H1 (cell line): ENCODE measurements at regions of chr15 and their contacts with region 1.

Region 1: DNA sequence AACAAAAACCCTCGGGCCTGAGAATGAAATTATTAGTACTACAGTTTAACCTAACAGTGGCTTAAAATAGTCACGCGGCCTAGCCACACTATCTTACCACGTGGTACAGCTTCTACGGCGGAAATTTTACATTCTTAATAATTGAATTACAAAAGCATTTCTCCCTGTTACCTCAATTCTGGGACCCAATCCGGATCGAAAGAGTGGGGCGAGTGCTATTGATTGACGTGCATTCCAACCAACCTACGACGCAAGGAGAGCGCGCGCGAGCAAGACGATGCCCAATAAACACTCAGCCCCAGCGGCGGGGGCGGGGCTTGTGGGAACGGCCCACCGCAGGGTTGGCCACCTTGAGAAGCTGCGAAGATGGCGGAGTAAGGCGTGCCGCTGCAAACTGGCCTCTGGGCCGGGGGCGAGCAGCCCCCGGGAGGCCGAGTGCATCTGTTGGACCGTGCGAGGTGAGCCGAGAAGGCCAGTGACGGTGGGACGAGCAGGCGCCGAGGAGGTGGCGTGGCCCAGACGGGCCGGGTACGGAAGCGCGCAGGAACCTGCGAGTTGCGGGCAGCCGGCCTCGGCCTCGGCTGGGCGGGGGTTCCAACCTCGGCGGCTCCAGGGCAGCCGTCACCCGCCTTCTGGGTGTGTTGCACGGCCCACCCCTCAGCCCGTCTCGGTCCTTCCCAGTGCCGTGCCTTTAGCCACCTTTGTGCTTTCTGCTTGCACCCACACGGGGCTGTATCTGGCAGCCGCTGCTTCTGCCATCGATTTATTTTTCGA is 48.6 kb downstream of the OIP5 start:
- DNase-seq: peak; percentile 96 to 97
- H3K4me3 ChIP-seq: peak overlapping the region; percentile 76 to 95 (median 90)
- H3K27ac ChIP-seq: peak overlapping the region; percentile 92
- H3K4me1 ChIP-seq: peaks cover 0 to 5% (median 2%) of the 10 kb centered on the region in 4 experiments; a peak in 3 of 7 replicates
- H3K27me3 ChIP-seq: no peaks in the 10 kb centered on the region
- CTCF ChIP-seq: no peak
- EP300 ChIP-seq: no peak
- POLR2A ChIP-seq: peak; percentile 95 to 98
- RAD21 ChIP-seq: no peak

Region 2: DNA sequence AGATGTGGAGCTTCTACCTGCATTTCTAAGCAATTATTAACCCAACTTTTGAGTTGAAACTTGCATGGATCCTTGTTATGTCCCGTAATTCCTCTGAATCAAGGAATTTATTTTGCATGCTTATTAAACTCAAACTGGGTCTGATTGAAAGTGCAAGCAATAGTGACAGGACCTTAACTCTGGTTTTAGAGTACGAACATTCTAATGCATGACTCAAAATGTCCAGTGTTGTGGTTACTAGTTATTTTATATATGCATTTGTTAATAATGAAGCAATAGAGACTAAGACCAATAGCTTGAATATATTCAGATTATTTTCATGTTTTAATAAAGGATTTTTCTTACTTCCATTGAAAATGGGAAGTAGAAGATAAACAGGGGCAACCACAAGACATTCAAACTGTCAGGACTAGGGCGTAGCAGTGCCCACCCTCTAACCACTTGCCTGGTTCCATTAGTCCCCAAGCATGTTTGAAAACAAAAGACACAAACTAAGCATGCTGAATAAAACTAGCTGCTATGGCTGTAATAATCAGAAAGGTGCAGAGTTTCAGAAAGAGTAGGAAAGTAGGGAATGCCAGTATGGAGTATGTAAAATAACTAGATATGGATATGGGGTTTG is 20.4 kb after region 1 on chr15:
- CTCF ChIA-PET with region 1: interaction called, 3 read pairs
- POLR2A ChIA-PET with region 1: interaction called, 15 read pairs
- DNase-seq: no peak
- H3K4me3 ChIP-seq: no peak overlapping the region
- H3K27ac ChIP-seq: no peak overlapping the region
- H3K4me1 ChIP-seq: peaks cover 0 to 11% (median 2%) of the 10 kb centered on the region in 4 experiments; a peak in 3 of 7 replicates
- H3K27me3 ChIP-seq: no peaks in the 10 kb centered on the region
- CTCF ChIP-seq: no peak
- EP300 ChIP-seq: no peak
- POLR2A ChIP-seq: no peak
- RAD21 ChIP-seq: no peak

Region 3: GRCh38 chr15:41331833-41332787 is 48.3 kb after region 1 on chr15 and contains the start of gene OIP5:
- CTCF ChIA-PET with region 1: interaction called, 6 read pairs
- POLR2A ChIA-PET with region 1: interaction called, 18 read pairs
- DNase-seq: peak; percentile 93 to 98
- H3K4me3 ChIP-seq: peak within 1 kb of the TSS; percentile 83 to 92 (median 90)
- H3K27ac ChIP-seq: peak within 1 kb of the TSS; percentile 90
- H3K4me1 ChIP-seq: no peaks in the 10 kb centered on the region; a peak in 1 of 7 replicates
- H3K27me3 ChIP-seq: no peaks in the 10 kb centered on the region
- CTCF ChIP-seq: peak; percentile 61 to 69 (median 62)
- EP300 ChIP-seq: no peak
- POLR2A ChIP-seq: peak; percentile 96 to 98
- RAD21 ChIP-seq: peak; percentile 59 to 61
- total RNA-seq, gene OIP5: 34.8 and 36.7 TPM in 2 replicates

Region 4: DNA sequence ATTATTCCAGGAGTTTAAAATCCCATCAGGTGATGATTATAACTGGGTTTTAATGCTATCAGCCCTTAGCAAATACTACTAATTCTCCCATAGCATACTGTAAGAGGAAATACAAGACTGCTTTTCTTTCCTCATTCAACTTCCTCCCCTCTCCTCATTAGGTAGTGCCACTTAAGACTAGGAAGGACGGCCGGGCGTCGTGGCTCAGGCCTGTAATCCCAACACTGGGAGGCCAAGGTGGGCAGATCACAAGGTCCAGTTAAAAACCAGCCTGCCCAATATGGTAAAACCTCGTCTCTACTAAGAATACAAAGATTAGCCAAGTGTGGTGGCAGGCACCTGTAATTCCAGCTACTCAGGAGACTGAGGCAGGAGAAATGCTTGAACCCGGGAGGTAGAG is 103.8 kb after region 1 on chr15:
- CTCF ChIA-PET with region 1: no interaction called
- POLR2A ChIA-PET with region 1: no interaction called
- DNase-seq: no peak
- H3K4me3 ChIP-seq: no peak overlapping the region
- H3K27ac ChIP-seq: no peak overlapping the region
- H3K4me1 ChIP-seq: no peaks in the 10 kb centered on the region
- H3K27me3 ChIP-seq: no peaks in the 10 kb centered on the region
- CTCF ChIP-seq: no peak
- EP300 ChIP-seq: no peak
- POLR2A ChIP-seq: no peak
- RAD21 ChIP-seq: no peak